ENCODE measurements at regions of chr1 and their contacts with region 1.

Region 1: DNA sequence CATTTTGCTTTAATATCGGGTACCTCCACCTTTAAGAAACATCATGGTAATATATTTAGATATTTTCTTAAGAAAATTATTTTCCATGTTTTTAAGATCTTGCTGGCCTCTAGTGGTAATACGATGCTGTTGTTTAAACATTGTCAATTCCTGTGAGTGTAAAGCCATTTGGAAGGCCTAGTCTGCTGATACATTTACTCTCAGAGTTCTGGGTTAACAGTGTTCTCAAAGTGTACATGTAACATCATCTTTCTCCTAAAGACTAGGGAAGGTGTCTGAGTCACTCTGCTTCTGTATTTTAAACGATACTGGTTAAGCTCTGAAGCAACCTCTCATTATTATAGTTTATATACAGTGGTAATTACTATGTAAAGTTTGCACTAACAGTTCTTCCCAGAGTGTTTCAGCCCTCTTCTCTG is 189.1 kb downstream of the RASAL2 start:
- DNase-seq: no peak
- H3K4me3 ChIP-seq: no peak overlapping the region
- H3K27ac ChIP-seq: no peak overlapping the region
- H3K4me1 ChIP-seq: peaks cover 0 to 7% of the 10 kb centered on the region in 2 donors
- H3K27me3 ChIP-seq: no peaks in the 10 kb centered on the region
- CTCF ChIP-seq: peak; percentile 12 to 57 (median 52)
- POLR2A ChIP-seq: no peak

Region 2: DNA sequence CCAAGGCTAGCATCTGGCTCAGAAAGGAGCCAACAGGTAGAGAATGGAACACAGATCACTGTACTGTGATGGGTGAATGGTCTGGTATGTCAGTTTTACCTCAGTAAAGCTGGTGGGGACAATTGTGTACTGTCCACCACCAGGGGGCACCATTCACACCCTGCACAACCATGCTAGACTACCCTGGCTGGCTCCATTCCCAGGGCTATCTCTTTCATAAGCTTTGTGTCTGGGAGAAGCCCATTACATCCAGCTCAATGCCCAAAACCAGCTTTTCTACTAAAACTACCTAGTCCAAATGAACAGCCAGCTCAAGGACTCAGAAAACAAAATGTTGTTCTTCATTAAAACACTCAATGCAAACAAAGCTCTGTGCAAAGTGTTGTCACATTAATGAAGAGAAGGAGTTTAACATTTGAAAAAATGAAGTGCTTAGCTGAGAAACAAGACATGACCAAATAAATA is 251.1 kb before region 1 on chr1:
- intact Hi-C with region 1: loop called (anchors 10 kb)
- DNase-seq: peak; percentile 86 to 97 (median 94)
- H3K4me3 ChIP-seq: no peak overlapping the region
- H3K27ac ChIP-seq: peak overlapping the region in 1 of 5 donors; percentile 32
- H3K4me1 ChIP-seq: peaks cover 0 to 7% of the 10 kb centered on the region in 2 donors
- H3K27me3 ChIP-seq: no peaks in the 10 kb centered on the region
- CTCF ChIP-seq: peak; percentile 80 to 92 (median 86)
- POLR2A ChIP-seq: no peak

Measured in adrenal gland (tissue), 19 donors.